ENCODE measurements at regions of chr14 and their contacts with region 1.

Region 1: GRCh38 chr14:73713803-73714655 is at the start of gene PNMA1:
- DNase-seq: peak; percentile 90
- H3K4me3 ChIP-seq: peak within 1 kb of the TSS; percentile 71
- H3K27ac ChIP-seq: peak within 1 kb of the TSS; percentile 58
- H3K4me1 ChIP-seq: peaks cover 27% of the 10 kb centered on the region
- CTCF ChIP-seq: no peak
- total RNA-seq, gene PNMA1: 5.8 and 6.0 TPM in 2 replicates

Region 2: DNA sequence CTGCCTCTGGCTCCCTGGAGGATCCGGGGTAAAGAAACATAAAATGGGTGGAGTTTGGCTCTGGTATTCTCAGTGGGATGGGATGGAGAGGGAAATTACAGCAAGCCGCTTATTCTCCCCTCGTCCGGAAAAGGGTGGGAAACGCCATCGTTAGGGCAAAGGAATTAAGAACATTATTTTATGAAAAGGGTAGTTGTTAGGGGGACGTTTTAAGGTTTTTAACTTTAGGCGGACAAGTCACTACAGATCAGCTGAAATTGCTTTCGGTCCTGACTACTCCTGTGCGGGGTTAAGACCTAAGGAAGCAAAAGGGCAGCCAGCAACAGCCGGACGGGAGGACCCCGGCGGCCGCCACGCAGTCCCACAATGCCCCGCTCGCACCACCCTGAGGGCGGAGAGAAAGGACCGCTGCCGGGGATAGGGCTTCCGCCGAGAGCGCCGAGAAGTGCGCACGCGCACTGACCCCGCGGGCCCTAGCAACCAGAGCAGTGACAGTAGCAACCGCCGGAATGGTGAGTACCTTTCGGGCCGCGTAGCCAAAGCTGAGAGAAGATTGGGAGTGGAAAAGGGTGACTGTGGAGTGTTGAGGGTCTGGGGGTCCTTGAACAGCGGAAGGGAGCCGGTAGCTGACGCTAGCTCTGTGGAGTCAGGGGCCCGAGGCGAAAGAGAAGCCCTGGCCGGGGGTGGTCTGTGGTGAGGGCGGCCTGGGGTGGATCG is 69.3 kb before region 1 on chr14 and contains the start of gene DNAL1:
- CTCF ChIA-PET with region 1: no interaction called
- POLR2A ChIA-PET with region 1: interaction called, 6 read pairs
- intact Hi-C with region 1: loop called (anchors 2 kb)
- DNase-seq: peak; percentile 93
- H3K4me3 ChIP-seq: peak within 1 kb of the TSS; percentile 75
- H3K27ac ChIP-seq: no peak within 1 kb of the TSS
- H3K4me1 ChIP-seq: peaks cover 13% of the 10 kb centered on the region
- CTCF ChIP-seq: no peak
- total RNA-seq, gene DNAL1: 5.6 and 6.7 TPM in 2 replicates

Measured in OCI-LY7 (cell line).